ENCODE measurements at regions of chrX and their contacts with region 1.

Region 1: DNA sequence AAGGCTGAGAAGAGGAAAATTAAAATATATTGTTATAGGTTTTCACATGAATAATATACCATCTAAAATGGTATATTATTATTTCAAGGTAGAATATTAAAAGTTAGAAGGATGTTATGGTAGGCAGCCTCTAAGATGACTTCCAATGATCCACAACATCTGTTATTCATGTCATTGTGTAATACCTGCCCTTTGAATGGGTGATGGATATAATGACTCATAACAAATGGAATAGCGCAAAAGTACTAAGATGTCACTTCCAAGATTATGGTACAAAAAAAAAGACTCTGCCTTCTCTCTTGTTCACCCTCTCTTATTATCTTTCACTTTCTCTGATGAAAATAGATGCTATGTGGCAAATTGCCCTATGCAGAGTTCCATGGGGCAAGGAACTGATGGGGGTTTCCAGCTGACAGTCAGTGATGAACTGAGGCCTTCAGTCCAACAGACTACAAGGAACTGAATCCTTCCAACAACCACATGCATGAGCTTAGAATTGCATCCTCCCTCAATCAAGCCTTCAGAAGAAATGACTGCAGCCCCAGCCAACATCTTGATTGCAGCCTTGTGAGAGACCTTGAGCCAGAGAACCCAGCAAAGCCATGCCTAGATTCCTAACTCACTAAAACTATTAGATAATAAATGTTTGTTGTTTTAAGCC is 57.7 kb downstream of the HS6ST2 start:
- DNase-seq: no peak
- ATAC-seq: no peak
- H3K4me3 ChIP-seq: no peak overlapping the region
- H3K4me3 Mint-ChIP-seq: no peak overlapping the region
- H3K27ac ChIP-seq: no peak overlapping the region
- H3K27ac Mint-ChIP-seq: no peak overlapping the region
- H3K4me1 ChIP-seq: no peaks in the 10 kb centered on the region
- H3K4me1 Mint-ChIP-seq: no peaks in the 10 kb centered on the region
- H3K27me3 ChIP-seq: no peaks in the 10 kb centered on the region
- H3K27me3 Mint-ChIP-seq: peaks cover 0 to 6% (median 2%) of the 10 kb centered on the region in 5 donors

Region 2: DNA sequence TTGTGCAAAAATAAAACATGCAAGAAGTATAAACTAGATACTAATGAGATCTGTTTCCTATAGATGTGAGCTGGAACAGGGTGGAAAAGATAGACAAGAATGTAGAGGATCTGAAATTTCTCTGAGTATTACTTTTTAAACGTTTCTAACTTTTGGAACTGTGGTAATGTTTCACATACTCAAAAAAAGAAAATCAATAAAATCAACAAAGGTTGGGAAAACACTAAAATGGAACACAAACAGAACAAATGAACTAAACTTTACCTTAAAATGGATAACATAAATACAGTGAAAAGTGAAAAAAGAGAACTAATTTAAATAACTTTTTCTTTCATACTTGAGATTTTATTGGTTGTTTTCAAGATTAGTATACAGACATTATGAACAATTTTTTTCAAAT is 380.0 kb before region 1 on chrX:
- CTCF ChIA-PET with region 1: no interaction called
- POLR2A ChIA-PET with region 1: no interaction called
- intact Hi-C with region 1: no loop called
- DNase-seq: no peak
- ATAC-seq: no peak
- H3K4me3 ChIP-seq: no peak overlapping the region
- H3K4me3 Mint-ChIP-seq: no peak overlapping the region
- H3K27ac ChIP-seq: no peak overlapping the region
- H3K27ac Mint-ChIP-seq: no peak overlapping the region
- H3K4me1 ChIP-seq: no peaks in the 10 kb centered on the region
- H3K4me1 Mint-ChIP-seq: no peaks in the 10 kb centered on the region
- H3K27me3 ChIP-seq: no peaks in the 10 kb centered on the region
- H3K27me3 Mint-ChIP-seq: peaks cover 0 to 3% (median 0%) of the 10 kb centered on the region in 5 donors

Region 3: DNA sequence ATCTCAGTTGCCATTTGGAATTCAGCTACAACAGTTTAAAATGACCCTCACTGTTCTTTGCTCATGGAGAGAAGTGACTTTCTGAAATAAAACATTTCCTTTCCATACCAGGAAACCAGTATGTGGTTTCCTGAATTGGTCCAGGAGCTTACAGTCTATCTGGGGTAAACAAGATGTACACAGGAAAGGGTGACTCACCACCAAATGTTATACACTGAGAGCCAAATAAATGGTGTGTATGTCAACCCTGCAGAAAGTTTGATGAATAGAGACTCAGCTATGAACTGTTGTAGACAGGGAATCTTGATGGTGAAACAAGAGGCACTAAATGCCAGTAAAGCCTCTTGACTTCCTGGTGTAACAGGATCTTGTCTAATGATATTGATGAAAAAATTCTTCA is 42.7 kb before region 1 on chrX:
- CTCF ChIA-PET with region 1: no interaction called
- POLR2A ChIA-PET with region 1: no interaction called
- intact Hi-C with region 1: loop called in 1 of 2 experiments (anchors 1 kb)
- DNase-seq: no peak
- ATAC-seq: no peak
- H3K4me3 ChIP-seq: no peak overlapping the region
- H3K4me3 Mint-ChIP-seq: peak overlapping the region in 1 of 10 donors; percentile 44
- H3K27ac ChIP-seq: no peak overlapping the region
- H3K27ac Mint-ChIP-seq: peak overlapping the region in 1 of 9 donors; percentile 76
- H3K4me1 ChIP-seq: no peaks in the 10 kb centered on the region
- H3K4me1 Mint-ChIP-seq: peaks cover 0 to 36% (median 5%) of the 10 kb centered on the region in 7 donors
- H3K27me3 ChIP-seq: no peaks in the 10 kb centered on the region
- H3K27me3 Mint-ChIP-seq: peaks cover 0 to 5% (median 0%) of the 10 kb centered on the region in 5 donors

Region 4: GRCh38 chrX:133346026-133346425 is 445.3 kb after region 1 on chrX:
- CTCF ChIA-PET with region 1: no interaction called
- POLR2A ChIA-PET with region 1: no interaction called
- intact Hi-C with region 1: no loop called
- DNase-seq: no peak
- ATAC-seq: no peak
- H3K4me3 ChIP-seq: no peak overlapping the region
- H3K4me3 Mint-ChIP-seq: no peak overlapping the region
- H3K27ac ChIP-seq: no peak overlapping the region
- H3K27ac Mint-ChIP-seq: no peak overlapping the region
- H3K4me1 ChIP-seq: no peaks in the 10 kb centered on the region
- H3K4me1 Mint-ChIP-seq: no peaks in the 10 kb centered on the region
- H3K27me3 ChIP-seq: no peaks in the 10 kb centered on the region
- H3K27me3 Mint-ChIP-seq: peaks cover 0 to 3% (median 0%) of the 10 kb centered on the region in 5 donors